ENCODE measurements at regions of chr21 and their contacts with region 1.

Region 1: DNA sequence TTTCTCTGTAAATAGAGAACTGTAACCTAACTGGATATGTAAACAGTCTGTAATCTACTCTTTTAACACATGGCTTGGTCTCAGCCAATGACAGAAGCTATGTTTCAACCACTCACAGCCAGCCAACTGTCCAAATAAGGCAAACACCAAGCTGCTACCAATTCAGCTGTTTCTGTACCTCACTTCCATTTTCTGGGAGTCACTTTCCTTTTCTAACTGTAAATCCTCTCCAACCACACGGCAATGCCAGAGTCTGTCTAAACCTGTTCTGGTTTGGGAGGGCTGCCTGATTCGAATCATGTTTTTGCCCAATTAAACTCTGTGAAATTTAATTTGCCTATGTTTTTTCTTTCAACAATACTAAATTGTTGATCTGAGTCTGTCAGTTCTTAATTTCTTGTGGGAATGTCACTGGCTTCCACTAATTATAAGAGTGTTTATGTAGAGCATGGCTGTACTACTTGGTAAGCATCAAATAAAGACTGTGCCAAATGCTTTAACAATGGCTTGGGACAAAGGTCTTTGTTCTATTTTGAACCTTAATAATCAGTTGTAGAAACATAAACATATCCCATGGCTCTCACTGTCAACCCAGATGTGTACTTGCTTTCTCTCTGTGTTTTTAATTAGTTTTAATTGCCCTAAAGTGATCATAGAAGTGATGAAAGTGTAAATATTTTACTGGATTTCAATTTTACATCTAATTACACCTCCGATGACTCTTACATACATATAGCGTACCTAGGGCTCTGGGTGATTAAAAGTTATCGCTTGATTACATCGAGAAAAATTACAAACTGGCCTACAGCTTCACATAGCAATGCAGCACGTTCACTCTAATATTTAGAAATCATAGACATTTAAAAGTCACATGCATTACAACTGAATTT is 1144.6 kb upstream of the TMPRSS15 start:
- DNase-seq: no peak
- ATAC-seq: no peak
- H3K4me3 ChIP-seq: no peak overlapping the region
- H3K4me3 Mint-ChIP-seq: no peak overlapping the region
- H3K27ac ChIP-seq: no peak overlapping the region
- H3K27ac Mint-ChIP-seq: no peak overlapping the region
- H3K4me1 ChIP-seq: no peaks in the 10 kb centered on the region
- H3K4me1 Mint-ChIP-seq: no peaks in the 10 kb centered on the region
- H3K27me3 ChIP-seq: no peaks in the 10 kb centered on the region
- H3K27me3 Mint-ChIP-seq: no peaks in the 10 kb centered on the region
- CTCF ChIP-seq: no peak

Region 2: GRCh38 chr21:19489930-19490329 is 58.3 kb before region 1 on chr21:
- CTCF ChIA-PET with region 1: no interaction called
- POLR2A ChIA-PET with region 1: no interaction called
- intact Hi-C with region 1: loop called in 1 of 2 experiments (anchors 10 kb)
- DNase-seq: no peak
- ATAC-seq: no peak
- H3K4me3 ChIP-seq: no peak overlapping the region
- H3K4me3 Mint-ChIP-seq: no peak overlapping the region
- H3K27ac ChIP-seq: no peak overlapping the region
- H3K27ac Mint-ChIP-seq: no peak overlapping the region
- H3K4me1 ChIP-seq: no peaks in the 10 kb centered on the region
- H3K4me1 Mint-ChIP-seq: no peaks in the 10 kb centered on the region
- H3K27me3 ChIP-seq: no peaks in the 10 kb centered on the region
- H3K27me3 Mint-ChIP-seq: no peaks in the 10 kb centered on the region
- CTCF ChIP-seq: no peak

Region 3: GRCh38 chr21:19700476-19700875 is 152.3 kb after region 1 on chr21:
- CTCF ChIA-PET with region 1: no interaction called
- POLR2A ChIA-PET with region 1: no interaction called
- intact Hi-C with region 1: no loop called
- DNase-seq: no peak
- ATAC-seq: no peak
- H3K4me3 ChIP-seq: no peak overlapping the region
- H3K4me3 Mint-ChIP-seq: no peak overlapping the region
- H3K27ac ChIP-seq: no peak overlapping the region
- H3K27ac Mint-ChIP-seq: no peak overlapping the region
- H3K4me1 ChIP-seq: no peaks in the 10 kb centered on the region
- H3K4me1 Mint-ChIP-seq: no peaks in the 10 kb centered on the region
- H3K27me3 ChIP-seq: no peaks in the 10 kb centered on the region
- H3K27me3 Mint-ChIP-seq: no peaks in the 10 kb centered on the region
- CTCF ChIP-seq: no peak